ENCODE measurements at regions of chr3 and their contacts with region 1.

Region 1: DNA sequence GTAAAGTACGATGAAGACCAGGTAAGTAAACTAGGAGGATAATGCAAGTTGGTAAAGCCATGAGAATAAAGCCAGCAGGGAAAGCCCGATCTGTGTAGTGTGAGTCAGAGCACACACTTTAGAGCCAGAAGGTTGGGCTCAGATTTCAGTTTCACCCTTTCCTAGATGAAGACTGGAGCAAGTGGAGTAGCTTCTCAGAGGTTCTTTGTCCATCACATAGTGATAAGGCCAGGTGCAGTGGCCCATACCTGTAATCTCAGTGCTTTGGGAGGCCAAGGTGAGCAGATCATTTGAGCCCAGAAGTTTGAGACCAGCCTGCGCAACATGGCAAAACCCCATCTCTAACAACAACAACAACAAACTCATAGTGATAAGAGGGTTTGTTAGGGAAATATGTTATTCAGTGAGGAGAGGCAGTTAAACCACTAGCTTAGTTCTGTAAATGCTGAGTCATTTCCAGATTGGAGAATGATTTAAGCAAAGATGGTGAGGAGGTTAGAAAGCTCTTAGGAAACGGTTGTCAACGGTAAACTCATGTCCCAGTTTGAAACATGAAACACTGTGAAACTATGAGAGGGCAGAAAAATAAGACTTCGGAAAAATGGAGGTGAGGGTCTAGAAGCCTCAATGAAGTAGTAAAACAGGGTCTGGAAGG is 39.0 kb downstream of the IL12A start:
- DNase-seq: peak; percentile 77
- H3K4me3 Mint-ChIP-seq: peak overlapping the region; percentile 27
- H3K27ac Mint-ChIP-seq: peak overlapping the region; percentile 92
- H3K4me1 Mint-ChIP-seq: peaks cover 22% of the 10 kb centered on the region
- H3K27me3 Mint-ChIP-seq: no peaks in the 10 kb centered on the region

Region 2: DNA sequence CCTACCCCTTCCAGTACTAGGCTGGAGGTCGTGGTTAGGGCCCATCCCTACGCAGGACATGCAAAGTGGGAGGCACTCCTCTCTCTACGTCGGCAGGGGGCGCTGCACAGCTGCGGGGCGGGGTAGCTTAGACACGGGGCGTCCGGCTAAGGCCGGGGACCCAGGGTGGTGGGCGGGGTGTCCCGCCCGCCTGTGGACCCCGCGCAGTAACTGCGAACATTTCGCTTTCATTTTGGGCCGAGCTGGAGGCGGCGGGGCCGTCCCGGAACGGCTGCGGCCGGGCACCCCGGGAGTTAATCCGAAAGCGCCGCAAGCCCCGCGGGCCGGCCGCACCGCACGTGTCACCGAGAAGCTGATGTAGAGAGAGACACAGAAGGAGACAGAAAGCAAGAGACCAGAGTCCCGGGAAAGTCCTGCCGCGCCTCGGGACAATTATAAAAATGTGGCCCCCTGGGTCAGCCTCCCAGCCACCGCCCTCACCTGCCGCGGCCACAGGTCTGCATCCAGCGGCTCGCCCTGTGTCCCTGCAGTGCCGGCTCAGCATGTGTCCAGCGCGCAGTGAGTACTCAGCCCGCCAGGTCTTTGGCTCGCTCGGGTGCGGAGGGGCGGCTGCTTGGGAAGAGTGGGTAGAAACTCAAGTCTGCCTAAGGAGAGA is 38.9 kb before region 1 on chr3 and contains the start of gene IL12A:
- intact Hi-C with region 1: loop called (anchors 1 kb)
- DNase-seq: peak; percentile 95
- H3K4me3 Mint-ChIP-seq: peak within 1 kb of the TSS; percentile 74
- H3K27ac Mint-ChIP-seq: peak within 1 kb of the TSS; percentile 26
- H3K4me1 Mint-ChIP-seq: peaks cover 18% of the 10 kb centered on the region
- H3K27me3 Mint-ChIP-seq: peaks cover 22% of the 10 kb centered on the region
- total RNA-seq, gene IL12A: 0.21 and 0.59 TPM in 2 replicates

Region 3: GRCh38 chr3:160012108-160012507 is 15.6 kb before region 1 on chr3:
- intact Hi-C with region 1: loop called (anchors 1 kb)
- DNase-seq: peak; percentile 62
- H3K4me3 Mint-ChIP-seq: peak overlapping the region; percentile 5
- H3K27ac Mint-ChIP-seq: peak overlapping the region; percentile 14
- H3K4me1 Mint-ChIP-seq: peaks cover 34% of the 10 kb centered on the region
- H3K27me3 Mint-ChIP-seq: no peaks in the 10 kb centered on the region

Region 4: DNA sequence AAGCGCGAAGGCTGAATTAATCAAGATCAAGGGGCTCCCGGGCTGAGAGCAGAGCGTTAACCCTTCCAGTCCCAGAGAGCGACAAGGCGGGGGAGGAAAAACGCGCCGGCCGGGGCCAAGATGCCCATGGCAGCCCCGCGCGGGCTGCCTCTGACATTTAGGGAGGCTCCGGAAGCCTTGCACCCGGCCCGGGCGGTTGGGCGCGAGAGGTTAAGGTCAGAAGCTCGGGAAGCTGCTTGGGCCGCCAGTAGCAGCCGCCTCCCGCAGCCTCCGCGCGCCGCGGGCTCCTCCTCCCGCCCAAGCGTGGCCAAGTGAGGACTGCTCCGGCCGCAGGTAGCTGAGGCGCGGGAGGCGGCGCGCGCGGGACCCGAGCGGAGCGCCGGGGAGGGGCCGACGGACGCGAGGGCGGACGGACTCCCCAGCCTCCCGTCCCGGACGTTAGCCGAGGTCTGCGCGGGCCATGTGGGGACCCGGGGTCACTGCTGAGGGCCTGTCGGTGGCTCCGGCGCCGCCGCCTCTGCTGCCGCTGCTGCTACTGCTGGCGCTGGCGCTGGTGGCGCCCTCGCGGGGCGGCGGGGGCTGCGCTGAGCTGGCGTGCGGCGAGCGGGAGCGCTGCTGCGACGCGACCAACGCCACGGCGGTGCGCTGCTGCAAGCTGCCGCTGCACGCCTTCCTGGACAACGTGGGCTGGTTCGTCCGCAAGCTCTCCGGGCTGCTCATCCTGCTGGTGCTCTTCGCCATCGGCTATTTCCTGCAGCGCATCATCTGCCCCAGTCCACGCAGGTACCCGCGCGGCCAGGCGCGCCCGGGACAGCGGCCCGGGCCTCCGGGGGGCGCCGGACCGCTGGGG is 197.7 kb after region 1 on chr3 and contains the start of gene C3orf80:
- intact Hi-C with region 1: loop called (anchors 5 kb)
- DNase-seq: peak; percentile 85
- H3K4me3 Mint-ChIP-seq: peak within 1 kb of the TSS; percentile 84
- H3K27ac Mint-ChIP-seq: peak within 1 kb of the TSS; percentile 20
- H3K4me1 Mint-ChIP-seq: peaks cover 16% of the 10 kb centered on the region
- H3K27me3 Mint-ChIP-seq: peaks cover 61% of the 10 kb centered on the region
- total RNA-seq, gene C3orf80: 0.07 TPM in 1 of 2 replicates, not detected in the other

Region 5: DNA sequence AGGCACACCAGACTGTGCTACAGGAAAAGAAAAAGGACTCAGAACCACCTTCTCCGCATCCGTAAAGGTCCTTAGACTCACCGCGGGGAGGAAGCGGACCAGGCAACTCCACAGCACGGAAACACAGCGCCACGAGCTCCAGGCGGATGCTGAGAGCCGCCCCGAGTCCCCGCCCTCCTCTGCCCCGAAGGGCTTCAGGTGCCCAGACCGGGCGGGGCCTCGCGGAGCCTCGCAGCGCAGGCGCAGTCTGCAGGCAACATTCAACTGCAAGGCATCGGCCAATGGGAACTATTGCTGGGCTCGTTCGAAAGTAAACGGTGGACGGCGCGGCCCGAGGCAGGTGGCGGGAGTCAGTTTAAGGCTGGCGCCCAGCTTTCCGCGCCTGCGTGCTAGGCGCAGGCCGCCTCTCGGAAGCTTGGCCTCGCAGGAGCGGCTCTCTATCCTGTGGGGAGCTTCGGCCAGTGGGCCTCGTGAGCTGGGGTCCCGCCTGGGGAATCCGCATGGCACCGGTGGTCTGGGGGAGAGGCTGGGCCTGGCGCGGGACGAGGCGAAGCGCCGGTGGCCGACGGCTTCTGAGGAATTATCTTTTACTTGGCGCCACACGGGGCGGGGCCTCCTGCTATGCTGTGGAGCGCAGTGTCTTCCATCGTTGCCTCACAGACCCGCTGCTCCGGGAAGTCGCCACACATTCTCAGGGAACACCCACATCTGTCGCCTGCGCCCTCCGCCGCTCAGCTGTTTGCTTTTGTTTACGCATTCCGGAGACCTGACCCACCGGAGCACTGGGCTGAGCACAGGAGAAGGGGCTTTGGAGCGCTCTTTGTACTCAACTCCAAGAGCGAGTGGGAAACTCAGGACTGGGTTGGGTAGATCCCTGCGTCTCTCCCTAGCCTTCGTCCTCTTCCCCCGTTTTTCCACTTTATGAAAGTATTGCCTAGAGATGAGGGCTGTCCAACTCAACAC is 422.2 kb after region 1 on chr3 and contains the start of gene TRIM59:
- intact Hi-C with region 1: loop called (anchors 1 kb)
- DNase-seq: peak; percentile 99
- H3K4me3 Mint-ChIP-seq: peak within 1 kb of the TSS; percentile 99
- H3K27ac Mint-ChIP-seq: peak within 1 kb of the TSS; percentile 100
- H3K4me1 Mint-ChIP-seq: peaks cover 29% of the 10 kb centered on the region
- H3K27me3 Mint-ChIP-seq: no peaks in the 10 kb centered on the region
- total RNA-seq, gene TRIM59: 31.8 and 35.0 TPM in 2 replicates